Calu3 (cell line): ENCODE measurements at regions of chr20 and their contacts with region 1.

Region 1: GRCh38 chr20:4607287-4607713 is 114.4 kb upstream of the PRND start:
- DNase-seq: peak; percentile 39
- H3K4me3 Mint-ChIP-seq: no peak overlapping the region
- H3K27ac Mint-ChIP-seq: no peak overlapping the region
- H3K4me1 Mint-ChIP-seq: no peaks in the 10 kb centered on the region
- H3K27me3 Mint-ChIP-seq: peaks cover 86% of the 10 kb centered on the region
- CTCF ChIP-seq: peak; percentile 73

Region 2: DNA sequence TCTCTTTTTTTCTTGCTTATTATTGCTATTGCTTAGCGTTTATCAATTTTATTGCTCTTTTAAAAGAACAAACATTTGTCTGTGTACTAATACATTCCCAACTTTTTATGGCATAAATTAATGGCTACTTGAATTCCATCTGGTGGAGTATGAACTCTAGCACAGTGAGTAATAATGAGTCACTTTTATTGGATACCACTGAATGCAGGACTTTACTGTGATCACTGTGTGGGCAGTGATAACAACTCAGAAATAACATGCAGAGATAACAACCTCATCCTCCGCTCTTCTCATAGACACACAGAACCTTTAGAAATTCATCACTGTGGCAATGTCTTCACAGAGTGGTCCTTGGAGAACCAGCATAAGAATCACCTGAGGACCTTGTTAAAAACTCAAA is 60.5 kb before region 1 on chr20:
- CTCF ChIA-PET with region 1: no interaction called
- intact Hi-C with region 1: no loop called
- DNase-seq: no peak
- H3K4me3 Mint-ChIP-seq: no peak overlapping the region
- H3K27ac Mint-ChIP-seq: no peak overlapping the region
- H3K4me1 Mint-ChIP-seq: peaks cover 28% of the 10 kb centered on the region
- H3K27me3 Mint-ChIP-seq: peaks cover 25% of the 10 kb centered on the region
- CTCF ChIP-seq: no peak

Region 3: GRCh38 chr20:4720041-4720976 is 113.0 kb after region 1 on chr20:
- CTCF ChIA-PET with region 1: no interaction called
- intact Hi-C with region 1: loop called (anchors 2 kb)
- DNase-seq: peak; percentile 24
- H3K4me3 Mint-ChIP-seq: no peak overlapping the region
- H3K27ac Mint-ChIP-seq: no peak overlapping the region
- H3K4me1 Mint-ChIP-seq: no peaks in the 10 kb centered on the region
- H3K27me3 Mint-ChIP-seq: peaks cover 66% of the 10 kb centered on the region
- CTCF ChIP-seq: peak; percentile 33

Region 4: GRCh38 chr20:4956200-4956810 is 349.0 kb after region 1 on chr20:
- CTCF ChIA-PET with region 1: no interaction called
- intact Hi-C with region 1: loop called (anchors 5 kb)
- DNase-seq: peak; percentile 8
- H3K4me3 Mint-ChIP-seq: no peak overlapping the region
- H3K27ac Mint-ChIP-seq: no peak overlapping the region
- H3K4me1 Mint-ChIP-seq: peaks cover 2% of the 10 kb centered on the region
- H3K27me3 Mint-ChIP-seq: no peaks in the 10 kb centered on the region
- CTCF ChIP-seq: peak; percentile 22

Region 5: DNA sequence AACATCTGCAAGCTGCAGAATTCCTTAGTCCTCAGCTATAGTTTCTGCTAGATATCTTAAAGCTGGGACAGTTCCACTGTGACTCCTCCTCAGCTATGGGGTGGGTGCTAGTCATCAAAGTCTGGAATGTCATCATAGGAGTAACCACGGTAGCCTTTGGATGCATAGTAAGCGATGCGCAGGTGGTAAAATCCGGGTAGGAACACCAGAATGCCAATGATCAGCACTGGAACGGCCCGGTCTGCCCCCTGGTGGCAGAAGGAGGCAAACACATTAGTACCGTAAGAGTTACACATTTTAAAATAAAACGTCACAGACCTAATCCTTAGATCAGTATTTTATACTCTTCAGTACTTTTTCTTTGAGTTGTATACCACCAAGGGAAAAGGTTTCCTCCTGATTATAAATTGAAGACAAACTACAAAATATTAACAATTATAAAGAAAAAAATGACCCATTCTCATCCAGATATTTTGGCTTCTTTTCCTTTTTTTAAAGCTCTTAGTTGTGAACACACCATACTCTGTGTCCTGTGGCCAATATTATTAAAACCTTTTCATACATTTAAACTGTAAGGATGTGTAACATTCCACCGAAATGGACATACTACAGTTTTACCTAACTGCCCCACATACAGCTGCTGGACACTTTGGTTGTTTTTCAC is 493.5 kb after region 1 on chr20:
- CTCF ChIA-PET with region 1: no interaction called
- intact Hi-C with region 1: loop called (anchors 5 kb)
- DNase-seq: peak; percentile 67
- H3K4me3 Mint-ChIP-seq: no peak overlapping the region
- H3K27ac Mint-ChIP-seq: no peak overlapping the region
- H3K4me1 Mint-ChIP-seq: no peaks in the 10 kb centered on the region
- H3K27me3 Mint-ChIP-seq: no peaks in the 10 kb centered on the region
- CTCF ChIP-seq: peak; percentile 71

Region 6: DNA sequence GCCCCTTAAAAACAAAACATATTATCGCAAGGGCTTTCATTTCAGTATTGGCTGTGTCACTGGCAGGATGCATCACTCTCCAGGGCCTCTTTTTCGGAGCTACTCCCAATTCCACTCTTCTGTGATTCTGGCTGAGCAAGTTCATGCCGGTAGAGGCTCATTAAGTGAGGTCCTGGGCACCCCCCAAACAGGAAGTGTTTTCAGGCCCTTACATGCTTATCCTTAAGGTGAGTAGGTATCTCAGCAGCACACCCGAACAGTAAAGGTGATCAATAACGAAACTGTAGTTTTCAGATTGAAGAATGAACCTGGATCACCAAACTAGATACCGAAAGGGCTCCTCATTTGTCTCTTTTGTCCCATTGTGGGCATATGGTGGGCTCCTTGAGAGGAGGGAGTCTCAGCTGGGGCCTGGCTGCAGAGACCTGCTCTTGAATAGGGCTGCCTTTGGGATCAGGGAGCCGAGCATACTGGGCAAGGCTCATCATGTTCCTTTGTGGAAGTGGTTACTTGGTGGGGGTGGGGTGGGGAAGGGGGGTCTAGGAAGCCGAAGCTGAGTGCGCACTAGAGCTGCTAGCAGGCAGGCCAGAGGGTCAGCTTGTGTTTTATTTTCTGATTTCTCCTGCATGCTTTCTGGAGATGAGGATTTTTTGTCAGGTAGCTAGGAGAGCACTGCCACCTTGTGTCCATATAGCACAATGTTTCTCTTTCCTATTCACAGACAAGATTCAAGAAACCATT is 584.7 kb after region 1 on chr20:
- CTCF ChIA-PET with region 1: no interaction called
- intact Hi-C with region 1: loop called (anchors 10 kb)
- DNase-seq: peak; percentile 8
- H3K4me3 Mint-ChIP-seq: no peak overlapping the region
- H3K27ac Mint-ChIP-seq: no peak overlapping the region
- H3K4me1 Mint-ChIP-seq: no peaks in the 10 kb centered on the region
- H3K27me3 Mint-ChIP-seq: no peaks in the 10 kb centered on the region
- CTCF ChIP-seq: peak; percentile 30